Aorta (tissue), 5 donors: ENCODE measurements at regions of chr18 and their contacts with region 1.

Region 1: GRCh38 chr18:56775701-56776100 is 124.5 kb downstream of the WDR7 start:
- DNase-seq: no peak
- ATAC-seq: no peak
- H3K4me3 ChIP-seq: no peak overlapping the region
- H3K27ac ChIP-seq: no peak overlapping the region
- H3K4me1 ChIP-seq: no peaks in the 10 kb centered on the region
- H3K27me3 ChIP-seq: no peaks in the 10 kb centered on the region

Region 2: GRCh38 chr18:56799756-56800155 is 24.1 kb after region 1 on chr18:
- intact Hi-C with region 1: loop called in 1 of 2 experiments (anchors 1 kb)
- DNase-seq: no peak
- ATAC-seq: no peak
- H3K4me3 ChIP-seq: no peak overlapping the region
- H3K27ac ChIP-seq: no peak overlapping the region
- H3K4me1 ChIP-seq: no peaks in the 10 kb centered on the region
- H3K27me3 ChIP-seq: no peaks in the 10 kb centered on the region

Region 3: GRCh38 chr18:57353137-57353939 is 577.6 kb after region 1 on chr18:
- intact Hi-C with region 1: no loop called
- DNase-seq: no peak
- ATAC-seq: peak; percentile 19
- H3K4me3 ChIP-seq: no peak overlapping the region
- H3K27ac ChIP-seq: no peak overlapping the region
- H3K4me1 ChIP-seq: no peaks in the 10 kb centered on the region
- H3K27me3 ChIP-seq: no peaks in the 10 kb centered on the region